IMR-90 (cell line): ENCODE measurements at regions of chr2 and their contacts with region 1.

Region 1: DNA sequence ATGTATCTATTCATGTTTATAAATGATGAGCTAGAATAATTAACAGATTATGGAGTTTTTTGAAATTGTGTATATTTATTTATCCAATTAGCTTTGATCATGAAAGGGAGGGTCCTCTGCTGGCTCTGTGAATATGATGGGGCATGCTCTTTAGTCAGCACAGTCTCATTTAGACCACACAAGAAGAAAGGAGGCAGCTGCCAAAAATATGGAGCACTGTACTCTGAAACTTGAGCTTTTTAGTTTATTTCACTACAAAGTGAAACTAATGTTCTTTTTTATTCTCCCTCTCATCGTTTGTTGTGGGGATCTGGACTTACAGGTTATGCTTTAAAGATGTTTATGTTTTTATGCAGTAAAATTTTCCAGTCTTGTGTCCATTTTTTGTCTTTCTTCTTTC is 266.9 kb upstream of the GULP1 start:
- DNase-seq: peak; percentile 42
- ATAC-seq: 0 out of 2 replicates have a peak, but pooled peaks have one; percentile 40
- H3K4me3 ChIP-seq: no peak overlapping the region
- H3K27ac ChIP-seq: no peak overlapping the region
- H3K4me1 ChIP-seq: no peaks in the 10 kb centered on the region
- H3K27me3 ChIP-seq: no peaks in the 10 kb centered on the region
- CTCF ChIP-seq: no peak
- POLR2A ChIP-seq: no peak
- RAD21 ChIP-seq: no peak

Region 2: DNA sequence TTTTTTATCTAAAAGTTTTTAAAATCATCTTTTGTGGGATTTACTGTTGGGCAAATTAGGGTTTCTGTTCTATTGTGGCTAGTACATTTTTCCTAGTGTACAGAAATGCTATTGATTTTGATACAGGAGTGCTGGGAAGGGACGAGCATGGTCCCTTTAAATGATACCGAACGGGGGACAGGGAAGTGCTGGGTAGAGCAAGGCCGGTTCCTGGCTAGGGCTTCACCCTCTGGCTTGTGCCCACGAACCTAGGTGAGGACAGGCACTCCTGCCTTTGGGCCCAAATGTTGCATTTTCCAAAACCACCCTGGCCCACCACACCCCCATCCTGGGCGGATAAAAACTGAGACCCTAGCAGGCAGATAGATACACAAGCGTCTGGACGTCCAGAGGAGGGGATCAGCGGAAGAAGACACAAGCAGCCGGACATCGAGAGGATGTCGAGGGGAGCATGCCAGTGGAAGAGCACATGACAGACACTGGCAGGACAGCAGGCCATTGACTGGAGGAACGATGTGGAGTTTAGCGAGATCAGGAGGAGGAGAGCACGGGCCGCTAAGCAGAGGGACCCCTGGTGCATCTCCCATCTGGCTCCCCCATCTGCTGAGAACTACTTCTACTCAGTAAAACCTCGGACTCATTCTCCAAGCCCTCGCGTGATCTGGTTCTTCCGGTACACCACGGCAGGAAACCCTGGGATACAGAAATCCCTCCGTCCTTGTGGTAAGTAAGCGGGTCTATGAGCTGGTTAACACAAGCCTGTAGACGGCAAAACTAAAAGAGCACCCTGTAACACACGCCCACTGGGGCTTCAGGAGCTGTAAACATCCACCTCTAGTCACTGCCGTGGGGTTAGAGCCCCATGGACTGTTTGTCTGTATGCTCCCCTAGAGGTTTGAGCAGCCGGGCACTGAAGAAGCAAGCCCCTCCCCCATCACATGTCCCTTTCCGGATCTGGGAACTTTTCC is 563.2 kb before region 1 on chr2:
- CTCF ChIA-PET with region 1: no interaction called
- POLR2A ChIA-PET with region 1: no interaction called
- dilution Hi-C with region 1: no loop called
- in situ Hi-C with region 1: no loop called
- intact Hi-C with region 1: no loop called
- DNase-seq: no peak
- ATAC-seq: peak; percentile 28; the same call in 1 of the 2 replicates
- H3K4me3 ChIP-seq: no peak overlapping the region
- H3K27ac ChIP-seq: no peak overlapping the region
- H3K4me1 ChIP-seq: no peaks in the 10 kb centered on the region
- H3K27me3 ChIP-seq: no peaks in the 10 kb centered on the region
- CTCF ChIP-seq: no peak
- POLR2A ChIP-seq: no peak
- RAD21 ChIP-seq: no peak

Region 3: GRCh38 chr2:188003800-188004199 is 21.0 kb before region 1 on chr2:
- CTCF ChIA-PET with region 1: no interaction called
- POLR2A ChIA-PET with region 1: no interaction called
- dilution Hi-C with region 1: no loop called
- in situ Hi-C with region 1: no loop called
- intact Hi-C with region 1: loop called (anchors 2 kb)
- DNase-seq: no peak
- ATAC-seq: no peak
- H3K4me3 ChIP-seq: no peak overlapping the region
- H3K27ac ChIP-seq: no peak overlapping the region
- H3K4me1 ChIP-seq: no peaks in the 10 kb centered on the region
- H3K27me3 ChIP-seq: no peaks in the 10 kb centered on the region; the same call in 1 of the 2 replicates
- CTCF ChIP-seq: no peak
- POLR2A ChIP-seq: no peak
- RAD21 ChIP-seq: no peak

Region 4: DNA sequence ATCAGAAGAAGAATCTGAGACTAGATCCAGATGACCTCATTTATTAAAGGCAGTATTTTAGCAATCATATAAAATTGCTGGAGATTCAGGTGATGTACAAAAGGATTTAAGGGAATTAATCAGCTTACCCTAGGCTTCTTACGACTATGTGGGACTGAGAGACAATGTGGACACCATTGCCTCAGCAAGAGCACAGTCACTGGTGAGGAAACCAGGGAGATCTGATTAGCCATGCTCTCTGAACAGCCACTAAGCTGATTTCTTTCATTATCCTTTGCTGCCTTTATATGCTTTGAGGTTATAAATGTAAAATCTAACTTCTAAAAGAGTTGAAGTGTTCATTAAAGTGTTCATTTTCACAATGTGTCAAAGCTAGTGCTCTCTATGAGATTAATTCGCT is 244.2 kb after region 1 on chr2:
- CTCF ChIA-PET with region 1: no interaction called
- POLR2A ChIA-PET with region 1: interaction called, 12 read pairs
- dilution Hi-C with region 1: no loop called
- in situ Hi-C with region 1: no loop called
- intact Hi-C with region 1: no loop called
- DNase-seq: no peak
- ATAC-seq: no peak
- H3K4me3 ChIP-seq: no peak overlapping the region
- H3K27ac ChIP-seq: no peak overlapping the region
- H3K4me1 ChIP-seq: no peaks in the 10 kb centered on the region
- H3K27me3 ChIP-seq: no peaks in the 10 kb centered on the region
- CTCF ChIP-seq: no peak
- POLR2A ChIP-seq: no peak
- RAD21 ChIP-seq: no peak

Region 5: GRCh38 chr2:189142893-189143759 is 1118.3 kb after region 1 on chr2:
- CTCF ChIA-PET with region 1: no interaction called
- POLR2A ChIA-PET with region 1: no interaction called
- dilution Hi-C with region 1: no loop called
- in situ Hi-C with region 1: no loop called
- intact Hi-C with region 1: no loop called
- DNase-seq: peak; percentile 36
- ATAC-seq: no peak
- H3K4me3 ChIP-seq: no peak overlapping the region
- H3K27ac ChIP-seq: peak overlapping the region; percentile 30; the same call in 1 of the 2 replicates
- H3K4me1 ChIP-seq: peaks cover 10% of the 10 kb centered on the region; the same call in 1 of the 2 replicates
- H3K27me3 ChIP-seq: no peaks in the 10 kb centered on the region
- CTCF ChIP-seq: peak; percentile 73
- POLR2A ChIP-seq: no peak
- RAD21 ChIP-seq: peak; percentile 48